Aorta (tissue), 5 donors: ENCODE measurements at regions of chr12 and their contacts with region 1.

Region 1: GRCh38 chr12:99455348-99456035 is 192.1 kb upstream of the GARIN6 start:
- DNase-seq: peak; percentile 60 to 64
- ATAC-seq: no peak
- H3K4me3 ChIP-seq: no peak overlapping the region
- H3K27ac ChIP-seq: no peak overlapping the region
- H3K4me1 ChIP-seq: no peaks in the 10 kb centered on the region
- H3K27me3 ChIP-seq: no peaks in the 10 kb centered on the region

Region 2: GRCh38 chr12:99386907-99387306 is 68.6 kb before region 1 on chr12:
- intact Hi-C with region 1: loop called in 1 of 2 experiments (anchors 5 kb)
- DNase-seq: no peak
- ATAC-seq: no peak
- H3K4me3 ChIP-seq: no peak overlapping the region
- H3K27ac ChIP-seq: no peak overlapping the region
- H3K4me1 ChIP-seq: peaks cover 0 to 2% of the 10 kb centered on the region in 2 donors
- H3K27me3 ChIP-seq: no peaks in the 10 kb centered on the region